CD14-positive monocyte (primary cell): ENCODE measurements at regions of chr1 and their contacts with region 1.

Region 1: DNA sequence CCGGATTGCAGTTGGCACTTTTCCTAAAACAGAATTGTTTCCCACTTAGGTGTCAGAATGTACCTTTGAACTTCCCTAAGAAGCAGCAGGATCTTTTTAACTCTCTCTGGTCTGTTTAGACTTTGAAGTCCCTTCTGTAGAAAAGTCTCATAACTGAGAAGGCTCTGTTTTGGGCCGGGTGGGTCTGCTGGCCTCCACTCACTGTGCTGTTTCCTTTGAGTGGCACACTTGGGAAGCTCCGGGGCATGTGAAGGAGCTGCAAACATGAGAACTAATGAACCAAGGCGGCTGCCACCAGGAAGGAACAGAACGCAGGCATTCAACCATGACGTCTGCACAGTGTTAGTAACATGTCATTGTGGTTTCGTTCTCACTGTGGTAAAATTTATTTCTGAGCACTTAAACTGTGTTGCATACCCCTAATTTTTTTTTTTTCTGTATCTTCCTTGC is 19.5 kb upstream of the NCMAP start:
- DNase-seq: peak in 1 of 3 donors; percentile 27
- H3K4me3 ChIP-seq: no peak overlapping the region
- H3K4me3 Mint-ChIP-seq: no peak overlapping the region
- H3K27ac ChIP-seq: peak overlapping the region in 1 of 2 donors; percentile 34
- H3K27ac Mint-ChIP-seq: peak overlapping the region in 6 of 7 donors; percentile 67 to 88 (median 78)
- H3K4me1 ChIP-seq: peaks cover 7 to 17% of the 10 kb centered on the region in 2 donors
- H3K4me1 Mint-ChIP-seq: peaks cover 31% of the 10 kb centered on the region
- H3K27me3 ChIP-seq: no peaks in the 10 kb centered on the region
- H3K27me3 Mint-ChIP-seq: no peaks in the 10 kb centered on the region
- CTCF ChIP-seq: no peak

Region 2: DNA sequence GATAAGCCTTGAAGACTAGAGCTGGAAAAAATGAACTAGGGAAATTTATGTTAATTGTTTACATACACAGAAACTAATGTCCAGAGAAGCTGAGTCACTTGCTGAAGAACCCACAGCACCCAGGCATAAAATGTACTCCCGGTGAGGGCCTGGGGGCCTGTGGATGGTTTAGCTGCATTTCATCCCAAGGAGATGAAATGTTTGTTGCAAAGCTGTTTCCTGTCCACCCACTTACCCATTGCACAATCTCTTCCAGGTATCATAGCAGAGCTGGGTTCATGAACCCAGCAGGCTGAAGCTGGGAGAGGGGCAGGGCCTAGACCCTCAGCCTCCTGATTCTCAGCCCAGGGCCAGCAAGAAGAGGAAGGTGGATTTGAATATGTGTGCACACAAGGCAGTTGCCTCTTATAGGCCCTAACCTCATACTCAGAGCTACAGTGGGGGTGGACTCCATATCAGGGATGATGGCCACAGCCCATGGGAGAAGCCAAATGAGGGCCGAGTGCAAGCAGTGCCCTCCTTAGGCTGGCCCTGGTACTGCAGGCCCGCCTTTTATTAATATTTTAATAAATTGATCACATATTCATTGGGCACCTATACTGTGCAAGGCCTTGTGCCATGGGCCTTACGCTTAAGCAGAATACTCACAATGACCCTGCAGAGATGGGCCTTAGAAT is 1674.5 kb before region 1 on chr1:
- intact Hi-C with region 1: no loop called
- DNase-seq: peak in 1 of 3 donors; percentile 14
- H3K4me3 ChIP-seq: no peak overlapping the region
- H3K4me3 Mint-ChIP-seq: no peak overlapping the region
- H3K27ac ChIP-seq: no peak overlapping the region
- H3K27ac Mint-ChIP-seq: no peak overlapping the region
- H3K4me1 ChIP-seq: no peaks in the 10 kb centered on the region
- H3K4me1 Mint-ChIP-seq: peaks cover 4% of the 10 kb centered on the region
- H3K27me3 ChIP-seq: no peaks in the 10 kb centered on the region
- H3K27me3 Mint-ChIP-seq: peaks cover 0 to 2% (median 2%) of the 10 kb centered on the region in 3 donors
- CTCF ChIP-seq: peak; percentile 74

Region 3: GRCh38 chr1:24201941-24202440 is 334.4 kb before region 1 on chr1:
- intact Hi-C with region 1: loop called in 1 of 2 experiments (anchors 10 kb)
- DNase-seq: peak; percentile 32 to 65 (median 53)
- H3K4me3 ChIP-seq: no peak overlapping the region
- H3K4me3 Mint-ChIP-seq: no peak overlapping the region
- H3K27ac ChIP-seq: no peak overlapping the region
- H3K27ac Mint-ChIP-seq: no peak overlapping the region
- H3K4me1 ChIP-seq: peaks cover 18 to 19% of the 10 kb centered on the region in 2 donors
- H3K4me1 Mint-ChIP-seq: peaks cover 17% of the 10 kb centered on the region
- H3K27me3 ChIP-seq: no peaks in the 10 kb centered on the region
- H3K27me3 Mint-ChIP-seq: peaks cover 4 to 6% (median 6%) of the 10 kb centered on the region in 3 donors
- CTCF ChIP-seq: peak; percentile 85

Region 4: DNA sequence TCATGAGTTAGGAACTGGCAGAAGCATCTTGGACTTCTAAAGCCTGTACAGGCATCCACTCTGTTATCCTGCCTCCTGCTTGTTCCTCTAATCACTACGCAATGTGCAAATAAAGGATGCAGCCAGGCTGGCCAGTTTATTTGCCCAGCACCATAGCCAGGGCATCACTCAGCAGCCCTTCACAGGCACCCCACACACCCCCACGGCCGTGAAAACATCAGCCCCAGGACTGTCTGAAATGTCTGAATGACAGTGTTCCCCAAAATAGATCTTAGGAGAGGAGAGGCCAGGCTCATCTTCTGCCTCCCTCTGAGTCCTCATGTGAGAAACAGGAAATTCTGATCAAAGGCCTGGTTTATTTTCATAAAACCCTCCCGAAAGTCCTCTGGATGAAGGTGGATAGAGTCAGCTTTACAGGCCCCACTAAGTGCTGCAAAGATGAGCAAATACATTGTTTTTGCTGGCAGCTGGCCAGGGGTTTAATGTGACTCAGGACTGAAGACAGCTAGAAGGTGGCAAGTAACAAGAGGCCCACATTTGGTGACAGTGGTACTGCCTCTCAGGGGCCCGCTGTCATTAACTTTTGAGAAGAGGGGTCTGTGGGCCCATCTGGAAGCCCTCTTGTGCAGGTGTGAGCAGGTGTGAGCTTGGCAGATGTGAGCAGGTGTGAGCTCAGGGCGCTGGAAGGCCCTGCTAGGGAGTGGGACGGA is 184.3 kb before region 1 on chr1:
- intact Hi-C with region 1: no loop called
- DNase-seq: no peak
- H3K4me3 ChIP-seq: no peak overlapping the region
- H3K4me3 Mint-ChIP-seq: no peak overlapping the region
- H3K27ac ChIP-seq: no peak overlapping the region
- H3K27ac Mint-ChIP-seq: no peak overlapping the region
- H3K4me1 ChIP-seq: no peaks in the 10 kb centered on the region
- H3K4me1 Mint-ChIP-seq: no peaks in the 10 kb centered on the region
- H3K27me3 ChIP-seq: no peaks in the 10 kb centered on the region
- H3K27me3 Mint-ChIP-seq: peaks cover 2 to 3% (median 3%) of the 10 kb centered on the region in 3 donors
- CTCF ChIP-seq: no peak